Left cardiac atrium (tissue), 4 donors: ENCODE measurements at regions of chr13 and their contacts with region 1.

Region 1: GRCh38 chr13:38530492-38530891 is 156.4 kb upstream of the FREM2 start:
- DNase-seq: no peak
- ATAC-seq: peak in 1 of 2 donors; percentile 50

Region 2: GRCh38 chr13:37640499-37640898 is 890.0 kb before region 1 on chr13:
- intact Hi-C with region 1: loop called in 1 of 2 experiments (anchors 10 kb)
- DNase-seq: no peak
- ATAC-seq: no peak

Region 3: DNA sequence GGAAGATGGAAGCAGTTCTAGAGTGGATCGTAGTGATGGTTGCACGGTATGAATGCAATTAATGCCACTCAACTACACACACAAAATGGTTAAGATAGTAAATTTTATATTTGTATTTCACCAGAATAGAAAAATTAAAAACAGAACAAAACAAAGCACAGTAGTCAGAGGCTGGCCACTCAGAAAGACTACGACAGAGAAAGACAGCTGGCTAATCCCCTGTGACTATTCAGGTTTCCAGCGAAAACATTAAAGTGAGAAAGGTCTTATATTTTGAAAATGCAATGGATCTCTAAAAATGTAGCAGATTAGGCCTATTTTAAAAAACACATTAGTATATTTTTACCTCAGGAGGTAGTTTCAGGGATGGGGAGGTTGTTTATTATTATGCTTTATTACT is 800.6 kb before region 1 on chr13:
- intact Hi-C with region 1: no loop called
- DNase-seq: no peak
- ATAC-seq: no peak

Region 4: GRCh38 chr13:37769078-37769477 is 761.4 kb before region 1 on chr13:
- intact Hi-C with region 1: loop called in 1 of 2 experiments (anchors 5 kb)
- DNase-seq: no peak
- ATAC-seq: no peak

Region 5: GRCh38 chr13:37869756-37870488 is 660.6 kb before region 1 on chr13 and contains the start of gene TRPC4:
- intact Hi-C with region 1: loop called in 1 of 2 experiments (anchors 10 kb)
- DNase-seq: peak; percentile 33
- ATAC-seq: peak; percentile 47 to 81
- total RNA-seq, gene TRPC4: 1.3 to 1.4 TPM